Stomach (tissue), 19 donors: ENCODE measurements at regions of chr22 and their contacts with region 1.

Region 1: GRCh38 chr22:31350410-31350863 is 4.3 kb upstream of the PATZ1 start:
- DNase-seq: peak; percentile 43 to 81
- H3K4me3 ChIP-seq: no peak overlapping the region
- H3K27ac ChIP-seq: no peak overlapping the region
- H3K4me1 ChIP-seq: peaks cover 8 to 21% (median 18%) of the 10 kb centered on the region in 4 donors
- H3K27me3 ChIP-seq: peaks cover 0 to 24% (median 0%) of the 10 kb centered on the region in 3 donors
- CTCF ChIP-seq: no peak
- EP300 ChIP-seq: no peak
- POLR2A ChIP-seq: no peak

Region 2: GRCh38 chr22:31241200-31241599 is 109.2 kb before region 1 on chr22:
- intact Hi-C with region 1: no loop called
- DNase-seq: no peak
- H3K4me3 ChIP-seq: no peak overlapping the region
- H3K27ac ChIP-seq: peak overlapping the region in 2 of 5 donors; percentile 48 to 67
- H3K4me1 ChIP-seq: peaks cover 28 to 82% (median 42%) of the 10 kb centered on the region in 4 donors
- H3K27me3 ChIP-seq: no peaks in the 10 kb centered on the region
- CTCF ChIP-seq: no peak
- EP300 ChIP-seq: no peak
- POLR2A ChIP-seq: no peak

Region 3: DNA sequence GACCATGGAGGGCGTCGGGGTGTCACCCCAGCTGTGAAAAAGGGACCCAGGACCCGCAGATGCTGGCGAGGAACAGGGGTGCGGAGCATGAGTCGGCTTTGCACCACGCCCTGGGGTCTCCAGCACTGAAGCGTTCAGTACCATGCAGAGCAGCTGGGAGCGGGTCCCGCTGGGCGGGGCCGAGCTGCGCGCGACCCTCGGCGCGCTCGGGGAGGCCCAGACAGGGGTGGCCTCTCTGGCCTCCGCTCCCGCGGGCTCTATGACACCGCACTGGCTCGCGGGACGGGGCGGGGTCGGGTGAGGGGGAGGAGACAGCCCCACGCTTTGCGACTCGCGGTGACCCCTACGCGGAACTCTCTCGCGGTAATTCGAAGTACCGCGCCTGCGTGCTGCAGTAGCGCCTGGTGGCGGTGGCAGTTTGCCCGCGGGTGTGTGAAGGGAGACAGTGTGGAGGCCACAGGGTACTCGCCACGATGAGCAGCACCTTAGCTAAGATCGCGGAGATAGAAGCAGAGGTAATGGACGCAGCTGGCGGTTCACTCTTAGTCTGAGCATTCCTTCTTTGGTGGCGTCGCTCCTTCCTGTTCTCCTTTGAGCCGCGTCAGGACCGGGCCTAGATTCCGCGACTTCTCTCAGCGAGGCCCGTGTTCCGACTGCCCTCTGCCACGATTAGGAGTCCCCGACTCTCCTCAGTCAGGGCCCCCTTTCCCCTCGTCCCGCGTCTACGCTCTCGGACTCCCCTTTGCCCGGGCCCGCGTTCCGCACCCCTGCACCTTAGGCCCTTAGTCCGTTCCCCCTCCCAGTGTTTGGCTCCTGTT is 49.0 kb after region 1 on chr22 and contains the start of gene DRG1:
- intact Hi-C with region 1: loop called (anchors 5 kb)
- DNase-seq: peak; percentile 98 to 99
- H3K4me3 ChIP-seq: peak within 1 kb of the TSS; percentile 73 to 86 (median 78)
- H3K27ac ChIP-seq: peak within 1 kb of the TSS; percentile 81 to 91 (median 88)
- H3K4me1 ChIP-seq: peaks cover 14 to 46% (median 28%) of the 10 kb centered on the region in 4 donors
- H3K27me3 ChIP-seq: no peaks in the 10 kb centered on the region
- CTCF ChIP-seq: peak in 1 of 7 experiments; percentile 21
- EP300 ChIP-seq: no peak
- POLR2A ChIP-seq: peak in 2 of 4 donors; percentile 55 to 94
- total RNA-seq, gene DRG1: 9.4 to 62.2 (median 35.0) TPM